ENCODE measurements at regions of chr6 and their contacts with region 1.

Region 1: GRCh38 chr6:53410508-53411258 is 61.9 kb upstream of the ELOVL5 start:
- DNase-seq: peak; percentile 57 to 71 (median 67)
- H3K4me3 ChIP-seq: no peak overlapping the region
- H3K4me3 Mint-ChIP-seq: no peak overlapping the region
- H3K27ac ChIP-seq: no peak overlapping the region
- H3K27ac Mint-ChIP-seq: peak overlapping the region in 1 of 7 donors; percentile 6
- H3K4me1 ChIP-seq: no peaks in the 10 kb centered on the region
- H3K4me1 Mint-ChIP-seq: peaks cover 0 to 5% (median 2%) of the 10 kb centered on the region in 4 donors
- H3K27me3 ChIP-seq: no peaks in the 10 kb centered on the region
- H3K27me3 Mint-ChIP-seq: peaks cover 3 to 4% of the 10 kb centered on the region in 2 donors

Region 2: DNA sequence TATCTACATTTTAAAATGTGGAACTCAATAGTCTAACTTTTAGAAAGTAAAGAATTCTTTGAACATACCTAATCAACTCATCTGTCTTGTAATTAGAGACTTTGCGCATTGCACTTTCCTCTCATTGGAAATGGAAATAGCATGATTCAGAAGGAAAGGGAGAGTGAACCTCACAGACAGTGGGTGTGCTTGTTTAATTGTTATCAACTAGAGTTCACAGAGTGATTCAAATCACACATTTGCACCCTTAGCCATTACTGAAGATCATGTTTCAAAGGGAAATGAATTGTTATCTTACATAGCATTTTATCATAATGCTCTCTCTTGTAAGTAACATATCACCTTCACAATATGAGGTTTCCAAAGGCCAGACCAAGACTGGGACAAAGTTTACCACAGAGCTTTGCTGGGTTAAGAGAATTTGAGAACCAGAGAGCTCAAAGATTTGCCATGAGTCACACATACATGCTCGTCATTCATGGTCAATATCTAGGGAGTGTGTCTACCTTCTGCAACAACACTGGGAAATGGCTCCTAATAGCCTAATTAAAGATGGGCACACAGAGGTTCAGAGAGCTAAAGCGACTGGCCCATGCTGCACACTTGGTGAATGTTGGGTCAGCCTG is 522.7 kb before region 1 on chr6:
- CTCF ChIA-PET with region 1: no interaction called
- POLR2A ChIA-PET with region 1: no interaction called
- intact Hi-C with region 1: no loop called
- DNase-seq: no peak
- H3K4me3 ChIP-seq: no peak overlapping the region
- H3K4me3 Mint-ChIP-seq: no peak overlapping the region
- H3K27ac ChIP-seq: no peak overlapping the region
- H3K27ac Mint-ChIP-seq: no peak overlapping the region
- H3K4me1 ChIP-seq: no peaks in the 10 kb centered on the region
- H3K4me1 Mint-ChIP-seq: no peaks in the 10 kb centered on the region
- H3K27me3 ChIP-seq: no peaks in the 10 kb centered on the region
- H3K27me3 Mint-ChIP-seq: peaks cover 4 to 5% of the 10 kb centered on the region in 2 donors

Region 3: DNA sequence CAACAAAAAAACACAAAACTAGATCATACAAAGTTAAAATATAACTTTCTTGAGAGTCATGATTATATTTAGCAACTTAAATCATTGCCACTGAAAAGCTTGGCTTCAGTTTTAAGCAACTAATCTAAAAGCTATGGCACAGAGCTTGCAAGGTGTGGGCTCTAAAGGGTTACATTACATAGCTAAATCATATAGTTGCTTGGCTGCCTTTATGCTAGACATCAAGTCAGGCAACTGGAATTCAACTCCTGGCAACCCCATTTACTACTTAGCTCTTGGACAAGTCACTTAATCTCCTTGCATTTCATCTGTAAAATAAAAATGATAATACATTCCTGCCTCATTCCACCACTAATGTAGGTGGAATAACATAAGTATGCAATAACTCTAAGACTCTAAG is 221.1 kb before region 1 on chr6:
- CTCF ChIA-PET with region 1: interaction called, 12 read pairs
- POLR2A ChIA-PET with region 1: no interaction called
- intact Hi-C with region 1: no loop called
- DNase-seq: no peak
- H3K4me3 ChIP-seq: no peak overlapping the region
- H3K4me3 Mint-ChIP-seq: peak overlapping the region in 1 of 8 donors; percentile 7
- H3K27ac ChIP-seq: no peak overlapping the region
- H3K27ac Mint-ChIP-seq: no peak overlapping the region
- H3K4me1 ChIP-seq: peaks cover 22% of the 10 kb centered on the region
- H3K4me1 Mint-ChIP-seq: peaks cover 6 to 23% (median 19%) of the 10 kb centered on the region in 4 donors
- H3K27me3 ChIP-seq: no peaks in the 10 kb centered on the region
- H3K27me3 Mint-ChIP-seq: no peaks in the 10 kb centered on the region

Region 4: DNA sequence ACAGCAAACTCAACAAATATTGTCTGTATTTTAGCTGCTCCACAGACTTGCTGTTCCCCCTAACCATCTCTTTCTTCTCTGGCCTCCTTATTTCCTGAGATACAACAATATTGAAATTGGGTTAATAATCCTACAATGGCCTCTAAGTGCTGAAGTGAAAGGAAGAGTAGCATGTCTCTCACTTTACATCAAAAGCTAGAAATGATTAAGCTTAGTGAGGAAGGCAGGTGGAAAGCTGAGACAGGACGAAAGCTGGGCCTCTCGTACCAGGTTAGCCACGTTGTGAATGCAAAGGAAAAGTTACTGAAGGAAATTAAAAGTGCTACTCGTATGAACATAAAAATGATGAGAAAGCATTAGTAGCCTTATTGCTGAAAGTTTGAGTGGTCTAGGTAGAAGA is 125.8 kb before region 1 on chr6:
- CTCF ChIA-PET with region 1: interaction called, 28 read pairs
- POLR2A ChIA-PET with region 1: no interaction called
- intact Hi-C with region 1: no loop called
- DNase-seq: no peak
- H3K4me3 ChIP-seq: no peak overlapping the region
- H3K4me3 Mint-ChIP-seq: peak overlapping the region; percentile 22 to 82 (median 53)
- H3K27ac ChIP-seq: no peak overlapping the region
- H3K27ac Mint-ChIP-seq: peak overlapping the region; percentile 38 to 95 (median 76)
- H3K4me1 ChIP-seq: peaks cover 94% of the 10 kb centered on the region
- H3K4me1 Mint-ChIP-seq: peaks cover 61 to 87% (median 75%) of the 10 kb centered on the region in 4 donors
- H3K27me3 ChIP-seq: no peaks in the 10 kb centered on the region
- H3K27me3 Mint-ChIP-seq: no peaks in the 10 kb centered on the region

Region 5: DNA sequence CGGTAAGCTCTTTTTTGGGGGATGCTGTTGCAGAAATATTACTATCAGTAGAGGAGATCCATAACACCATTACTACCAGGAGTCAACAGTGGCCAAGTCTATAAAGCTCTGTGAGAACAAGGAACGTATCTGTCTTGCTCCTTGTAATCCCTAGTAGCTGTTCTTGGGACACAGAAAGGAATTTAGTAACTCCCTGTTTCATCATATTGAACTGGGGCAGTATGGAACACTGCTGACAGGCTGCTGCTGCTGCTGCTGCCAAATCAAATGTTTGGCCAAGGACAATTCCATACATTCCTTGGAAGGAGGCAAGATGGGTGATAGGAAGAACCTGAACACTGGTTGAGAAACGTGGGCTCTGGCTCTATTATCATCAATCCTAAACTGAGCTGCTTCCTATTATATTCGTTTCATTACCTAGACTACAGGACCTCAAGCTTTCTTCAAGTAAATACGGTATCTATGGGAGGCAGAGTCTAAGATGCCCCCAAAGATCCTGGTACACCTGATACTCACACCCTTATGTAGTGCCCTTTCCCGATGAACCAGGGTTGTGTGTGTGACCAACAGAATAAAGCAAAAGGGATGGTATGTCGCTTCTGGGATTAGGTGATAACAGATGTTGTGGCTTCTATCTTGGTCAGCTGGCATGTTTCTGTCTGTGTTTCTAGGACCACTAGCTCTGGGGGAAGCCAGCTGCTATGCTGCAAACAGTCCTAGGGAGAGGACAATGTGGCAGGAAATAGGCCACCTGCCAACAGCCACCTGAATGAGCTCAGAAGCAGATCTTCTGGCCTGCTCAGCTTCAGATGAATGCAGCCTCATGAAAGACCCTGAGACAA is 101.4 kb before region 1 on chr6:
- CTCF ChIA-PET with region 1: interaction called, 16 read pairs
- POLR2A ChIA-PET with region 1: no interaction called
- intact Hi-C with region 1: no loop called
- DNase-seq: peak in 2 of 5 donors; percentile 24 to 48
- H3K4me3 ChIP-seq: no peak overlapping the region
- H3K4me3 Mint-ChIP-seq: peak overlapping the region in 7 of 8 donors; percentile 53 to 83 (median 65)
- H3K27ac ChIP-seq: peak overlapping the region; percentile 51
- H3K27ac Mint-ChIP-seq: peak overlapping the region; percentile 79 to 93 (median 85)
- H3K4me1 ChIP-seq: peaks cover 80% of the 10 kb centered on the region
- H3K4me1 Mint-ChIP-seq: peaks cover 72 to 84% (median 79%) of the 10 kb centered on the region in 4 donors
- H3K27me3 ChIP-seq: no peaks in the 10 kb centered on the region
- H3K27me3 Mint-ChIP-seq: no peaks in the 10 kb centered on the region

Region 6: DNA sequence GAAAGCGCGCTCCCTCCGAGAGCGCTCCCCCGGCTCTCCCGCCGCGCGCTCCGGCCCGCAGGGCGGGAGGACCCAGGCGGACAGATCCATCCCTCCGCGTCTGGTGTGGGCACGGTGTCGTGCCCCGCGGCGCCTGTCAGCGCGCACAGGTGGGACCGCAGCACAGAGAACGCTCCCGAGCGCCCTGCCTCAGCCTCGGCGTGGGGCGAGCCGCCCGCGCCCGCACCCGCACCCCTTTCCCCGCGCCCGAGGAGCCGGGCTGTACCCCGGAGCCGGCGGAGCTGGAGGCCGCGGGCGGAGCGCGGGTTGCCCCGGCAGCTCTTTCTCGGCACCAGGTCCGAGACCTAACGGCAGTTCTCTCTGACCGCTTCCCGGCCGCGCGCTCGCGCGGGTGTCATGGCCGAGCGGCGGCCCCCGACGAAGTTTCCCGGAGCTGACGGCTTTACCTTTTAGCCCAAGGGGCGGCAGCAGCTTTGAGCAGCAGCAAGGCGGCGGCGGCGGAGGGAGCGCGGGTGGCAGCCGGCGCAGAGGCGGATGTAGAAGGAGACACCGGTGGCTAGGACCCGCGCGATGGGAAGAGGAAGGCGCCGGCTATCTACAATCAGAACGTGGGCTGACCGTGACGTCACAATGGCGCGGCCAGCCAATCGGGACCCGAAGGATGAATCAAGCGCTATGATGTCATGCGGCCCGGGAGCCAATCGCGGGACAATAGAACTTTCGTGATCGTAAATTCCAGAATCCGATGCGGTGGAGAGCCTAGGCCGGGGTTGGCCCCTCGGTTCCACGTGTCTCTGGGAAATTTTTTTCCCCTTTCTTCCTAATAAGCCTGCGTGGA is 62.1 kb before region 1 on chr6 and contains the start of gene ELOVL5:
- CTCF ChIA-PET with region 1: interaction called, 8 read pairs
- POLR2A ChIA-PET with region 1: interaction called, 19 read pairs
- intact Hi-C with region 1: loop called (anchors 1 kb)
- DNase-seq: peak; percentile 92 to 98 (median 94)
- H3K4me3 ChIP-seq: peak within 1 kb of the TSS; percentile 55 to 88
- H3K4me3 Mint-ChIP-seq: peak within 1 kb of the TSS; percentile 94 to 99 (median 98)
- H3K27ac ChIP-seq: peak within 1 kb of the TSS; percentile 96
- H3K27ac Mint-ChIP-seq: peak within 1 kb of the TSS; percentile 97 to 99 (median 98)
- H3K4me1 ChIP-seq: peaks cover 42% of the 10 kb centered on the region
- H3K4me1 Mint-ChIP-seq: peaks cover 40 to 53% (median 46%) of the 10 kb centered on the region in 4 donors
- H3K27me3 ChIP-seq: no peaks in the 10 kb centered on the region
- H3K27me3 Mint-ChIP-seq: no peaks in the 10 kb centered on the region
- total RNA-seq, gene ELOVL5: 108 to 111 TPM

Region 7: DNA sequence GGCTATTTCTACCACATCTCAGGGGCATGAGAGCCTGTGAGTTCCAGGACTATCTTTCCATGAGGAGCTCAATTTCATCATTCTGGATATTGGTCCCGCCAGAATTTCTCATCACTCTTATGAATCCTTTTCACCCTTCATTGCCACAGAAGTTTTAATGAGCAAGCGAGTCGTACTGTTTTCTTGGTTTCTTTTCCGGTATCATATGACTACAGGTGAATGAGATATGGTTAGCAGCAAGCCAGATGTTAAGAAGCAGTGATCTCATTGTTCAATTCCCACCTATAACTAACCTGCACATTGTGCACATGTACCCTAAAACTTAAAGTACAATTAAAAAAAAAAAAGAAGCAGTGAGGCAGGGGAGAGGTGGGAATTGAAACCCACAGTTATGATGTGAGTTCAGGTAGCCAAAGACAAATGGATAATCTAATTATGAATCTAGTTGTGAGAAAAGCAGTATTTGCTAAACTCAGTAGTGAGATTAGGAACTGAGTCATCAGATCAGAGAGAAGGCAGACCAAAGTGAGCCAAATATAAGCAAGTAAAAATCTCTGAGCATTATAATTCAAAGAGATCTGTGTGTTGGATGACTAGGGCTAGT is 16.1 kb after region 1 on chr6:
- CTCF ChIA-PET with region 1: interaction called, 28 read pairs
- POLR2A ChIA-PET with region 1: no interaction called
- intact Hi-C with region 1: no loop called
- DNase-seq: no peak
- H3K4me3 ChIP-seq: no peak overlapping the region
- H3K4me3 Mint-ChIP-seq: peak overlapping the region in 7 of 8 donors; percentile 5 to 77 (median 40)
- H3K27ac ChIP-seq: no peak overlapping the region
- H3K27ac Mint-ChIP-seq: peak overlapping the region in 3 of 7 donors; percentile 18 to 60 (median 33)
- H3K4me1 ChIP-seq: peaks cover 8% of the 10 kb centered on the region
- H3K4me1 Mint-ChIP-seq: peaks cover 9 to 21% (median 15%) of the 10 kb centered on the region in 4 donors
- H3K27me3 ChIP-seq: peaks cover 5% of the 10 kb centered on the region
- H3K27me3 Mint-ChIP-seq: peaks cover 0 to 2% of the 10 kb centered on the region in 2 donors

Region 8: GRCh38 chr6:53484476-53485280 is 74.0 kb after region 1 on chr6:
- CTCF ChIA-PET with region 1: interaction called, 50 read pairs
- POLR2A ChIA-PET with region 1: no interaction called
- intact Hi-C with region 1: loop called (anchors 1 kb)
- DNase-seq: peak; percentile 64 to 71 (median 68)
- H3K4me3 ChIP-seq: no peak overlapping the region
- H3K4me3 Mint-ChIP-seq: no peak overlapping the region
- H3K27ac ChIP-seq: no peak overlapping the region
- H3K27ac Mint-ChIP-seq: no peak overlapping the region
- H3K4me1 ChIP-seq: no peaks in the 10 kb centered on the region
- H3K4me1 Mint-ChIP-seq: peaks cover 5 to 15% (median 8%) of the 10 kb centered on the region in 4 donors
- H3K27me3 ChIP-seq: peaks cover 4% of the 10 kb centered on the region
- H3K27me3 Mint-ChIP-seq: peaks cover 20 to 23% of the 10 kb centered on the region in 2 donors

Region 9: GRCh38 chr6:53517056-53517455 is 106.4 kb after region 1 on chr6:
- CTCF ChIA-PET with region 1: no interaction called
- POLR2A ChIA-PET with region 1: no interaction called
- intact Hi-C with region 1: no loop called
- DNase-seq: no peak
- H3K4me3 ChIP-seq: no peak overlapping the region
- H3K4me3 Mint-ChIP-seq: no peak overlapping the region
- H3K27ac ChIP-seq: no peak overlapping the region
- H3K27ac Mint-ChIP-seq: no peak overlapping the region
- H3K4me1 ChIP-seq: no peaks in the 10 kb centered on the region
- H3K4me1 Mint-ChIP-seq: no peaks in the 10 kb centered on the region
- H3K27me3 ChIP-seq: no peaks in the 10 kb centered on the region
- H3K27me3 Mint-ChIP-seq: no peaks in the 10 kb centered on the region

Region 10: GRCh38 chr6:53581173-53581773 is 170.6 kb after region 1 on chr6:
- CTCF ChIA-PET with region 1: no interaction called
- POLR2A ChIA-PET with region 1: no interaction called
- intact Hi-C with region 1: no loop called
- DNase-seq: no peak
- H3K4me3 ChIP-seq: no peak overlapping the region
- H3K4me3 Mint-ChIP-seq: no peak overlapping the region
- H3K27ac ChIP-seq: no peak overlapping the region
- H3K27ac Mint-ChIP-seq: peak overlapping the region in 1 of 7 donors; percentile 48
- H3K4me1 ChIP-seq: no peaks in the 10 kb centered on the region
- H3K4me1 Mint-ChIP-seq: peaks cover 0 to 3% (median 2%) of the 10 kb centered on the region in 4 donors
- H3K27me3 ChIP-seq: no peaks in the 10 kb centered on the region
- H3K27me3 Mint-ChIP-seq: peaks cover 0 to 2% of the 10 kb centered on the region in 2 donors